Activated CD4-positive, alpha-beta memory T cell treated with anti-CD3 and anti-CD28 coated beads for 36 hours (primary cell): ENCODE measurements at regions of chr15 and their contacts with region 1.

Region 1: DNA sequence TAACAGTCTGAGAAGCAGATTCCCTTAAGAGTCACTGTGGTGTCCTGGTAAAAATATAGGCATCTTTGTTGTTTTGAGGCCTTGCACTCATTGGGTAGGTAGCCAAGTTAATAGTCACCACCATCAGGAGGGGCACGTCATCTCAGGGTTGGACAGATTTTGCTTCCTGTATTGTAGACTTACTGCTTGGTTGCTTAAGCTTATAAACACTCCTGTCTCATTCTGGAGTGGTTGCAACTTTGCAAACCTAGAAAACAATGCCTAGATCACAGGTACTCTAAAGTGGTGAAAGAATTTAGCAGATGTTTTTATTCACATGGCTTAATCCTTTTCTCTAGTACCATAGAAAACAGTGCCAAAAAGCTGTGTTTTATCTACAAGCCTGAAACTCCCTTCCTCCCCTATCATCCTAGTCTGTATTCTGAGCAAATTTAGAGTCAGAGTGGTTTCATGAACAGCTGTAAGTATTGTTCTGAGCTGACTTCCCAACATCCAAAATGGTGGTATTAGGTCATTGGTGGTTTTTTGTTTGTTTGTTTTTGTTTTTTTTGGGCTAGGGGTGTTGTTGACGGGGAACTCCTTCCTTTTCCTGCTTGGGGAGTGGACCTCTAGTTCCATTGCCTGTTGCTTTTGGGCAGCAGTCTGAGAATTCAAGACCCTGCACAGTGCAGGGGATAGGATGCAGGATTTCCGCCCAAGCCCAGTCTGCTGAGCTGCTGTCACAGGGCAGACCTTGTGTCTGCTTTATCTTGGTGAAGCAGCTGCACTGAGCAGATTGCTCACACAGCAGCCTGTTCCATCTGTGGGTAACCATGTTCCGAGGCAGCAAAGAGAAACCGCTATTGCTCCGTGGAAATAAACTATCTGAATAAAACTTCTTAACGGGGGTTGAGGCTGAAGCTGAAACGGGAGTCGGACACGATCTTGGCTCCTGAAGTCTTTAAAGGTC is 202.0 kb downstream of the AKAP13 start:
- DNase-seq: peak; percentile 79
- H3K4me3 Mint-ChIP-seq: peak overlapping the region; percentile 86
- H3K27ac Mint-ChIP-seq: peak overlapping the region; percentile 93
- H3K4me1 Mint-ChIP-seq: peaks cover 79% of the 10 kb centered on the region
- H3K27me3 Mint-ChIP-seq: no peaks in the 10 kb centered on the region

Region 2: GRCh38 chr15:85330901-85331588 is 251.4 kb before region 1 on chr15:
- CTCF ChIA-PET with region 1: interaction called, 11 read pairs
- POLR2A ChIA-PET with region 1: interaction called, 6 read pairs
- intact Hi-C with region 1: loop called (anchors 1 kb)
- DNase-seq: peak; percentile 90
- H3K4me3 Mint-ChIP-seq: peak overlapping the region; percentile 82
- H3K27ac Mint-ChIP-seq: peak overlapping the region; percentile 77
- H3K4me1 Mint-ChIP-seq: peaks cover 38% of the 10 kb centered on the region
- H3K27me3 Mint-ChIP-seq: no peaks in the 10 kb centered on the region

Region 3: DNA sequence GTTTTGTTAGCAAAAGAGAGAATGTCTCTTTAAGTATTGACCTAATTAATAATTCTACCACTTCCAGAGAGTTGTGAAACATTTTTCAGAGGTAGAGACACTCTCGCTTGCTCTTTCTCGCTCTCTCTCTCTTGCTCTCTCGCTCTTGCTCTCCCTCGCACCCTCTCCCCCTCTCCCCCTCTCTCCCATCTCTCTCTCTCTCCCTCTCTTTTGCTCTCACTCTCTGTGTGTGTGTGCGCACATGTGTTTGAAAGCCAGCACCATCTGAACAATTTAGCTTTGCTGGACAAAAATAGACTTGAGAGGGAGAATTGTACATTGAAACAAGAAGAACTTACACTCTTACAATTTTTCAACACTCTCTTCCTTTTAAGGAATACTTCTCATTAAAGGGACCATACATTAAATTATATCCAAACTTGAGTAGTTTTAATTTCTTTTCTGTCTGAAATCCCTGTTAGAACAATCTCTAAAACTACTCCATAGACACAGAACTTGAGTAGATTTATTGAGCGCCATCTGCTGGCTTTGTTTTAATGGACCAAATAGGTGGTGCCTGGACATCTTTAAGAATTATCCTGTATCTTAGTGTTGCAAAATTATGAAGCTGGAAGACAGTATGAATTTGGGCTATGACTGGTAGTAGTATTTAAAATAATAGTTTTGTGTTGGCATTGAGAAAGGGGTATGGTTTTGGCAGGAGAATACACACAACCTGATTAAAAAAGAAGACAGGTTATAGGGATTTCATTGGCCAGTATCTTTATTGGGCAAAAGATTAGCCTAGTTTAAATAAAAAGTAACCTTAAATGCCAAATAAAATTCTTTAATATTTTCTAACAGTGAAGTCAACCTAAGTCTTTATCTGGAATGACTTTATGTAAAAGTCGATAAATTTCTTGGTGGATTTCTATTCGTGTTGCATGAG is 77.4 kb before region 1 on chr15:
- CTCF ChIA-PET with region 1: no interaction called
- POLR2A ChIA-PET with region 1: interaction called, 3 read pairs
- intact Hi-C with region 1: loop called (anchors 1 kb)
- DNase-seq: peak; percentile 38
- H3K4me3 Mint-ChIP-seq: no peak overlapping the region
- H3K27ac Mint-ChIP-seq: no peak overlapping the region
- H3K4me1 Mint-ChIP-seq: peaks cover 68% of the 10 kb centered on the region
- H3K27me3 Mint-ChIP-seq: no peaks in the 10 kb centered on the region

Region 4: DNA sequence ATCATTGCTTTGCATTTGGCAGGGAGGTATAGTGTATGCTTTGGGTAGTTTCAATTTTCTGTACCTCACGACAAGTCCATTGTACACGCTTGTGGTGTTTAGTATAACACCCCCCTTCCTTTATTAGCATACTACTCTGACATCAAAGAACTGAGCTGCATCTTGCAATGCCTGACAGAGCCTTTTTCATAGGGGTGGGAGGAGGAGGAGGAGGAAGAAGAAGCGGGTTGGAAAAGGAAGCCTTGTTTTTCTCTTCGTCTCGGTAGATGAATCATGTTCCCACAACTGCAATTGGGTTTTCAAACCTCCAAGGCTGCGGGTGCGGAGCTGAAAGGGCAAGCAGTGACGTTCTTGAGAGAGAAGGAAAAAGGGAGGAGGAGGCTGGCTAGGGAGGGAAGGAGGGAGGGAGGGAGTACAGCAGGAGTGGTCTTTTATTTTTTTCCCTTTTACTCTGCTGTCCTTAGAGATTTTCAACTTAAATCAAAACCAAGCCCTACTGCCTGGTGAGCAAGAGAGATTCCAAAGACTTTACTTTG is 36.6 kb after region 1 on chr15:
- CTCF ChIA-PET with region 1: interaction called, 4 read pairs
- POLR2A ChIA-PET with region 1: interaction called, 4 read pairs
- intact Hi-C with region 1: loop called (anchors 1 kb)
- DNase-seq: peak; percentile 81
- H3K4me3 Mint-ChIP-seq: no peak overlapping the region
- H3K27ac Mint-ChIP-seq: no peak overlapping the region
- H3K4me1 Mint-ChIP-seq: peaks cover 25% of the 10 kb centered on the region
- H3K27me3 Mint-ChIP-seq: no peaks in the 10 kb centered on the region

Region 5: DNA sequence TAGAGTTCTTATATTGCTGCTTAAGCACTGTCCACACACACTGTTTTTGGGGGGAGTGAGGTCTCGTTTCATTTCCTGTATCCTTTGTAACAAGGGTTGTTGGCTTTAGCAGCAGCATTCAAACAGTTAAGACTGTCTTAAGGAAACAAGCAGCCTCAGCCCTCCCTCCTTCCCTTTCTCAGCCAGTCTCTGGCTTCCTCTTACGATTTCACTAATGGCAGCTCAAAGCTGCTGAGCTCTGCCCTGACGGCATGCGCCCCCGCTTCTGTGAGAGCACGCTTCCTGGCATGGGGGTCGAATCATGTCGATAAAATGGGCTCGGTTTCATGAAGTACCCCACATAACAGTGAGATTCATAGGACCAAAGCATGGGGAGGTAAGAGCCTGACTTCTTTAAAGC is 107.3 kb after region 1 on chr15:
- CTCF ChIA-PET with region 1: interaction called, 3 read pairs
- POLR2A ChIA-PET with region 1: interaction called, 18 read pairs
- intact Hi-C with region 1: no loop called
- DNase-seq: peak; percentile 78
- H3K4me3 Mint-ChIP-seq: peak overlapping the region; percentile 81
- H3K27ac Mint-ChIP-seq: peak overlapping the region; percentile 98
- H3K4me1 Mint-ChIP-seq: peaks cover 78% of the 10 kb centered on the region
- H3K27me3 Mint-ChIP-seq: no peaks in the 10 kb centered on the region